ENCODE measurements at regions of chr12 and their contacts with region 1.

Region 1: GRCh38 chr12:93569656-93570551 is 2.6 kb upstream of the SOCS2 start:
- DNase-seq: peak; percentile 80
- ATAC-seq: peak; percentile 59
- H3K4me3 Mint-ChIP-seq: peak overlapping the region; percentile 85
- H3K27ac Mint-ChIP-seq: peak overlapping the region; percentile 80
- H3K4me1 Mint-ChIP-seq: peaks cover 23% of the 10 kb centered on the region
- H3K27me3 Mint-ChIP-seq: peaks cover 7% of the 10 kb centered on the region

Region 2: GRCh38 chr12:93742110-93742934 is 172.4 kb after region 1 on chr12:
- POLR2A ChIA-PET with region 1: interaction called, 10 read pairs
- DNase-seq: peak; percentile 80
- ATAC-seq: peak; percentile 95
- H3K4me3 Mint-ChIP-seq: peak overlapping the region; percentile 90
- H3K27ac Mint-ChIP-seq: peak overlapping the region; percentile 88
- H3K4me1 Mint-ChIP-seq: peaks cover 30% of the 10 kb centered on the region
- H3K27me3 Mint-ChIP-seq: no peaks in the 10 kb centered on the region

Region 3: GRCh38 chr12:94101738-94102660 is 532.1 kb after region 1 on chr12:
- POLR2A ChIA-PET with region 1: interaction called, 13 read pairs
- DNase-seq: peak; percentile 79
- ATAC-seq: peak; percentile 83
- H3K4me3 Mint-ChIP-seq: peak overlapping the region; percentile 87
- H3K27ac Mint-ChIP-seq: peak overlapping the region; percentile 87
- H3K4me1 Mint-ChIP-seq: peaks cover 28% of the 10 kb centered on the region
- H3K27me3 Mint-ChIP-seq: peaks cover 18% of the 10 kb centered on the region